ENCODE measurements at regions of chr13 and their contacts with region 1.

Region 1: DNA sequence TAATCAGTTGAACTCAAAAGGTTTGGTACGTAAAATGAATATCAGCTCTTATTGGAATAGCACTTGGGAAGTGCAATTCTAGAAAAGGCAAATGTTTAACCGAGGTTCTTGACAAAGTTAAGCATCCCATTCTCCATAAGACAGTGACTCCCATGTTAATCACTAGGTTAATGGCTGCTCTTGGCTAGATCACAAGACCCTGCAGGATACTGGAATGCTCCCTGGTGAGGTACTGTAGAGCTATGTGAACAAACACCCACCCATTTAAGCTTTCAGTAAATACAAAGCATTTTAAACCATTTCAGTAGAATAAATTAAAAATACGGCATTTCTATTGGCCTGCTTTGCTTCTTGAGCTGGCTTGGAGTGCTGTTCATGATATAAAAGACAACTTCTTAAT is 56.5 kb downstream of the TDRD3 start:
- DNase-seq: no peak
- H3K4me3 ChIP-seq: no peak overlapping the region
- H3K27ac ChIP-seq: no peak overlapping the region
- H3K27me3 ChIP-seq: no peaks in the 10 kb centered on the region
- CTCF ChIP-seq: no peak

Region 2: DNA sequence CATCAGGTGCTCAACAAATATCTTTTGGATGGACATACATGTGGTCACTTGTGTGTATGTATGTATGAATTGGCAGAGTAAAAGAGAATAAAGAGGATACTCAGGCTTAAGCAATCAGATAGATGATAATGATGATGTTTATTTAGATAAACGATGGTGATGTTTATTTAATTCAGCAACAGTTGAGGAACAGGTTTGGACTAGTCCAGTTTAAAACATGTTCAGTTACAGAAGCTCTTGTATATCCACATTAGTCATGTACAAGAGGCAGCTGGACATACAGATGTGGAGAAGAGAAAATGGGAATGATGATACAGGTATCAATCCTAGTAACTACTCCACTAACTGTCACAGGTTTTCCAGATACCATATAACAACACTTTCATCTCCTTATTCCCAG is 521.9 kb before region 1 on chr13:
- intact Hi-C with region 1: no loop called
- DNase-seq: no peak
- H3K4me3 ChIP-seq: no peak overlapping the region
- H3K27ac ChIP-seq: no peak overlapping the region
- H3K27me3 ChIP-seq: peaks cover 0 to 3% (median 0%) of the 10 kb centered on the region in 45 donors
- CTCF ChIP-seq: no peak

Region 3: DNA sequence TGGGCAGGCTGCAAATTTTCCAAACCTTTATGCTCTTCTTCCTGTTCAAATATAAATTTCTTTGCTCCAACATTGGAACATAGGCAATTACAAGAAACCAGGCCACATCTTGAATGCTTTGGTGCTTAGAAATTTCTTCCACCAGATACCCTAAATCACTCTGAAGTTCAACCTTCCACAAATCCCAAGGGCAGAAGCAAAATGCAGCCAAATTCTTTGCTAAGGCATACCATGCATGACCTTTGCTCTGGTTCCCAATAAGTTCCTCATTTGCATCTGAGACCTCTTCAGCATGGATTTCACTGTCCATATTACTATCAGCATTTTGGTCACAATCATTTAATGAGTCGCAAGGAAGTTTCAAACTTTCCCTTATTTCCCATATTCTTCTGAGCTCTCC is 420.6 kb before region 1 on chr13:
- intact Hi-C with region 1: no loop called
- DNase-seq: no peak
- H3K4me3 ChIP-seq: no peak overlapping the region
- H3K27ac ChIP-seq: no peak overlapping the region
- H3K27me3 ChIP-seq: peaks cover 0 to 8% (median 0%) of the 10 kb centered on the region in 45 donors
- CTCF ChIP-seq: no peak

Region 4: GRCh38 chr13:60617991-60618733 is 164.7 kb after region 1 on chr13:
- intact Hi-C with region 1: loop called in 1 of 2 experiments (anchors 10 kb)
- DNase-seq: no peak
- H3K4me3 ChIP-seq: no peak overlapping the region
- H3K27ac ChIP-seq: no peak overlapping the region
- H3K27me3 ChIP-seq: peaks cover 0 to 4% (median 0%) of the 10 kb centered on the region in 45 donors
- CTCF ChIP-seq: peak in 29 of 56 donors; percentile 6 to 55 (median 23)

Measured in dorsolateral prefrontal cortex (tissue), 120 donors.